AG04450 (cell line): ENCODE measurements at regions of chr11 and their contacts with region 1.

Region 1: DNA sequence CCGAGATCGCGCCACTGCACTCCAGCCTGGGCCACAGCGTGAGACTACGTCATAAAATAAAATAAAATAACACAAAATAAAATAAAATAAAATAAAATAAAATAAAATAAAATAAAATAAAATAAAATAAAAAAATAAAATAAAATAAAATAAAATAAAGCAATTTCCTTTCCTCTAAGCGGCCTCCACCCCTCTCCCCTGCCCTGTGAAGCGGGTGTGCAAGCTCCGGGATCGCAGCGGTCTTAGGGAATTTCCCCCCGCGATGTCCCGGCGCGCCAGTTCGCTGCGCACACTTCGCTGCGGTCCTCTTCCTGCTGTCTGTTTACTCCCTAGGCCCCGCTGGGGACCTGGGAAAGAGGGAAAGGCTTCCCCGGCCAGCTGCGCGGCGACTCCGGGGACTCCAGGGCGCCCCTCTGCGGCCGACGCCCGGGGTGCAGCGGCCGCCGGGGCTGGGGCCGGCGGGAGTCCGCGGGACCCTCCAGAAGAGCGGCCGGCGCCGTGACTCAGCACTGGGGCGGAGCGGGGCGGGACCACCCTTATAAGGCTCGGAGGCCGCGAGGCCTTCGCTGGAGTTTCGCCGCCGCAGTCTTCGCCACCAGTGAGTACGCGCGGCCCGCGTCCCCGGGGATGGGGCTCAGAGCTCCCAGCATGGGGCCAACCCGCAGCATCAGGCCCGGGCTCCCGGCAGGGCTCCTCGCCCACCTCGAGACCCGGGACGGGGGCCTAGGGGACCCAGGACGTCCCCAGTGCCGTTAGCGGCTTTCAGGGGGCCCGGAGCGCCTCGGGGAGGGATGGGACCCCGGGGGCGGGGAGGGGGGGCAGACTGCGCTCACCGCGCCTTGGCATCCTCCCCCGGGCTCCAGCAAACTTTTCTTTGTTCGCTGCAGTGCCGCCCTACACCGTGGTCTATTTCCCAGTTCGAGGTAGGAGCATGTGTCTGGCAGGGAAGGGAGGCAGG is at the start of gene GSTP1:
- DNase-seq: peak; percentile 78
- H3K4me3 ChIP-seq: peak within 1 kb of the TSS; percentile 80
- H3K27ac ChIP-seq: peak within 1 kb of the TSS; percentile 81
- H3K27me3 ChIP-seq: peaks cover 16% of the 10 kb centered on the region
- CTCF ChIP-seq: peak; percentile 51
- polyA plus RNA-seq, gene GSTP1: 716 and 965 TPM in 2 replicates

Region 2: GRCh38 chr11:67395555-67396257 is 187.8 kb before region 1 on chr11:
- CTCF ChIA-PET with region 1: no interaction called
- POLR2A ChIA-PET with region 1: no interaction called
- DNase-seq: no peak
- H3K4me3 ChIP-seq: no peak overlapping the region
- H3K27ac ChIP-seq: no peak overlapping the region
- H3K27me3 ChIP-seq: no peaks in the 10 kb centered on the region
- CTCF ChIP-seq: no peak

Region 3: GRCh38 chr11:67548633-67549032 is 34.9 kb before region 1 on chr11:
- CTCF ChIA-PET with region 1: no interaction called
- POLR2A ChIA-PET with region 1: no interaction called
- DNase-seq: no peak
- H3K4me3 ChIP-seq: no peak overlapping the region
- H3K27ac ChIP-seq: no peak overlapping the region
- H3K27me3 ChIP-seq: peaks cover 5% of the 10 kb centered on the region
- CTCF ChIP-seq: no peak

Region 4: DNA sequence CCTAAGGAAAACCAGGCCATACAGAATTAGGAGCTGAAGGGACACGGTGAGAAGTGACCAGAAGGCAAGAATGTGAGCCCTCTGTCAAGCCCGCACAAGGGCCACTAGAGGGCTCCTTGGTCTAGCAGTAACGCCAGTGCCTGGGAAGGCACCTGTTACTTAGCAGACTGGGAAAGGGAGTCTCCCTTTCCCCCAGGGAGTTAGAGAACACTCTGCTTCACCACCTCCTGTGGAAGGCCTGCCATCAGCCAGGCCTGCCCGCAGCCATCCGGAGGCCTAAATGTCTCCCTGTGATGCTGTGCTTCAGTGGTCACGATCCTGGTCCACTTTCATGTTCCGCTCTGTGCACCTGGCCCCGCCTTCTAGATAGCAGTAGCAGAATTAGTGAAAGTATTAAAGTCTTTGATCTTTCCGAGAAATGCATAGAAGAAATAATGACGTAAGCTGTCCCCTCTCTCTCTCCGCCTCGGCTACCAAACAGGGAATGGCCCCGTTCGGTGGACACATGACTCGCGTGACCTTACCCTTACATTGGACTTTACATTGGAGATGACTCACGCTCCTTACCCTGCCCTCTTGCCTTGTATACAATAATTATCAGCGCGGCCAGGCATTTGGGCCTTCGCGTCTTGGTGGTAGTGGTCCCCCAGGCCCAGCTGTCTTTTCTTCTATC is 10.6 kb before region 1 on chr11:
- CTCF ChIA-PET with region 1: no interaction called
- POLR2A ChIA-PET with region 1: no interaction called
- DNase-seq: no peak
- H3K4me3 ChIP-seq: no peak overlapping the region
- H3K27ac ChIP-seq: no peak overlapping the region
- H3K27me3 ChIP-seq: peaks cover 22% of the 10 kb centered on the region
- CTCF ChIP-seq: peak; percentile 76

Region 5: GRCh38 chr11:67606492-67607201 is 23.1 kb after region 1 on chr11 and contains the start of gene NDUFV1:
- CTCF ChIA-PET with region 1: no interaction called
- POLR2A ChIA-PET with region 1: interaction called, 12 read pairs
- DNase-seq: peak; percentile 65
- H3K4me3 ChIP-seq: peak within 1 kb of the TSS; percentile 70
- H3K27ac ChIP-seq: peak within 1 kb of the TSS; percentile 31
- H3K27me3 ChIP-seq: peaks cover 5% of the 10 kb centered on the region
- CTCF ChIP-seq: peak; percentile 44
- polyA plus RNA-seq, gene NDUFV1: 79.5 and 89.9 TPM in 2 replicates